GM10248 (cell line): ENCODE measurements at regions of chr3 and their contacts with region 1.

Region 1: DNA sequence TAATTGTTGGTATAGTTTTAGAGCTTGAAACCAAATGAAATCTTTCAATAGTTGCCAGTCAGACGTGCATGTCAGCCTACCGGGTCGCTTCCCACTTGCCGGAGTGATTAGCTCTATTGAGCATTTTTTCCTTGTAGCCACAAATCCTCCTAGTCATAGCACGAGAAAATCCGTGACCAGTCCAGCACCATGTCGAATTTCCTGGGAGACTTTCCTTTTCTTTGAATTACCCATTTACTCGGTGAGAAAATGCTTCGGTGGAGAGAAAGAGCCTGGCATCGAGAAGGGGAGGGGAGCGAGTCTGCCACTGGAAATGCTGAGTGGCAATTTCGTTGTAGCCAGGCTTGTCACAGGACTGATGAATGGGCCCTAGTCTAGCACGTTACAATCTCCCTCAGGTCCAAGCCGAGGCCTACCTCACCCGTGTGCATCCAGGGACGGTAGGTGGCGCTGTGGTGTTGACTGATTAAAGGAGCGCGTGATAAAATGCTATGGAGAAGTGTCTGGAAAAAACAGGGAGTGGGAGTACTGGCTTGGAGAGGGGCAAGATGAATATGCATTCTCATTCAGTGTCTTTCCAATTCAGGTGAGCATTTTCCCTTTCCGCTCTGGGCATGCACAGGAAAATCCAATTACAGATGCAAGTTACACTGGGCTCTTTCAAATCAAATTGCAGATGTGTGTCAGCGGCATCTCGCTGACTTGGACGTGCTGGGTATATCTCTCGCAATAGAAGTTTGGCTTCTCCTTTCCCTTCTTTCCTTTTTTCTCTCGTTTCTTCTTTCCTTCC is 238.8 kb downstream of the EDEM1 start:
- DNase-seq: peak; percentile 60
- CTCF ChIP-seq: peak; percentile 98

Region 2: DNA sequence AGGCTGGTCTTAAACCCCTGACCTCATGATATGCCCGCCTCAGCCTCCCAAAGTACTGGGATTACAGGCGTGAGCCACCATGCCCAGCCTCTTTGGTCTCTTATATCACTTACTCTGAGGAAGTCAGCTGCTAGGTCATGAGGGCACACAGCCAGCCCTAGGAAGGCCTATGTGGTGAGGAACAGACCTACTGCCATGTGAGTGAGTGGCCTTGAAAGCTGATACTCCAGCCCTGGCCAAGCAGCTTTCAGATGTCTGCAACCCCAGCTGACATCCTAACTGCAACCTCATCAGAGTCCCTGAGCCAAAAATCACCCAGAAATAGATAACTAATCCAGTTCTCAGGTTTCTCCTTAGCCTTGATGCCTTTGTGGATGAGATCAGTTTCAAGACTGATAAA is 14.5 kb before region 1 on chr3:
- CTCF ChIA-PET with region 1: interaction called, 15 read pairs
- POLR2A ChIA-PET with region 1: no interaction called
- DNase-seq: no peak
- CTCF ChIP-seq: no peak

Region 3: DNA sequence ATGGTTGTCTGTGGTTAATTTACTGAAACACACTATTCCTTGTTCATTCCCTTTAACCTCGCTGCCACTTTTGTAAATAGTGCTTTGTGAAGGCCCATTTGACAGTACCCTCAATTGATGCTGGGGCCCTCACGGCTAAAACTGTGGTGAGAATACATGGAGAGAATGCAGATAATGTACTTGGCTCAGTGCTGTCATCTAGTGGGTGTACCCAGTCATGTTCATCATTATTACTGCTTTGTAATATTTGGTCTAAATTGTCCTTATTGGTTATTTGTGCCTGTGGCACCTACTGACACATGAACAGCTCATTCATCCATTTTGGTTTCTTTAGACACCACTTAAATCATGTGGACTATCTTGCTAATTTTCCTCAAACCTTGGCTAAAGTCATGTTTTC is 304.8 kb after region 1 on chr3:
- CTCF ChIA-PET with region 1: interaction called, 11 read pairs
- POLR2A ChIA-PET with region 1: no interaction called
- DNase-seq: no peak
- CTCF ChIP-seq: no peak